Activated CD4-positive, alpha-beta memory T cell treated with anti-CD3 and anti-CD28 coated beads for 36 hours (primary cell): ENCODE measurements at regions of chr16 and their contacts with region 1.

Region 1: DNA sequence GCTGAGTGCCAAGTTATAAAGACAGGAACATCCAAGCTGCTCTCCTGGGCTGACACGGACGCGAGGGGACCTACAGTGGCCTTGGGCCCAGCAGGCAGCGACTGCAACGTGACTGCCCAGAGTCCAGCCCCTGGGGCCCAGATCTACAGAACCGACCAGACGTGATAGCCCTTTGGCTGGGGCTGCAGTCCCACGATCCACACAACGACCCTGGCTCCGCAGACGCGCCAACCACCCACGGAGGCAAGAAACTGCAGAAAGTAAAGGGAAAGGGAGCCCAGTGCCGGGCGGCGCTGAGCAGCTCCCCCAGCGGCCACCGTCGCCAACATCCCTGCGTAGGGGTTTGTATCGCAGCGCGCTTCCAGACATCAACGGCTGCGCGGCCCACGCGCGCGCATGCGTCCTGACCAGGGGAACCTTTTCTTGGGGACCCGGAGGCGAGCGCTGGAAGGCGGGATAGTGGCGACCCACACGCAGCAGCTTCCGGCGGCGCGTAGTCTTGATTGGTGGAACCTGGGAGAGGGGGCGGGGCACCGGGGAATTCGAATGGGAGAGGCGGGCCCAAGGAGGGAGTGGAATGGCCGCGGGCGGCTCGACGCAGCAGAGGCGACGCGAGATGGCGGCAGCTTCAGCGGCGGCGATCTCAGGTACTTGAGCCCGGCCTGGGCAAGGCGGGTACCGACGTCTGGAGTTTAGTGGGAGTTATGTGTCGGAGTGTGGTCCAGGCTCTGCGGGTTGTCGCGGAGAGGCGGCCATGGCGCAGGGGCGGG is at the start of gene KIF22:
- DNase-seq: peak; percentile 100
- H3K4me3 Mint-ChIP-seq: peak within 1 kb of the TSS; percentile 100
- H3K27ac Mint-ChIP-seq: peak within 1 kb of the TSS; percentile 97
- H3K4me1 Mint-ChIP-seq: peaks cover 38% of the 10 kb centered on the region
- H3K27me3 Mint-ChIP-seq: no peaks in the 10 kb centered on the region
- total RNA-seq, gene KIF22: 174 to 180 TPM

Region 2: DNA sequence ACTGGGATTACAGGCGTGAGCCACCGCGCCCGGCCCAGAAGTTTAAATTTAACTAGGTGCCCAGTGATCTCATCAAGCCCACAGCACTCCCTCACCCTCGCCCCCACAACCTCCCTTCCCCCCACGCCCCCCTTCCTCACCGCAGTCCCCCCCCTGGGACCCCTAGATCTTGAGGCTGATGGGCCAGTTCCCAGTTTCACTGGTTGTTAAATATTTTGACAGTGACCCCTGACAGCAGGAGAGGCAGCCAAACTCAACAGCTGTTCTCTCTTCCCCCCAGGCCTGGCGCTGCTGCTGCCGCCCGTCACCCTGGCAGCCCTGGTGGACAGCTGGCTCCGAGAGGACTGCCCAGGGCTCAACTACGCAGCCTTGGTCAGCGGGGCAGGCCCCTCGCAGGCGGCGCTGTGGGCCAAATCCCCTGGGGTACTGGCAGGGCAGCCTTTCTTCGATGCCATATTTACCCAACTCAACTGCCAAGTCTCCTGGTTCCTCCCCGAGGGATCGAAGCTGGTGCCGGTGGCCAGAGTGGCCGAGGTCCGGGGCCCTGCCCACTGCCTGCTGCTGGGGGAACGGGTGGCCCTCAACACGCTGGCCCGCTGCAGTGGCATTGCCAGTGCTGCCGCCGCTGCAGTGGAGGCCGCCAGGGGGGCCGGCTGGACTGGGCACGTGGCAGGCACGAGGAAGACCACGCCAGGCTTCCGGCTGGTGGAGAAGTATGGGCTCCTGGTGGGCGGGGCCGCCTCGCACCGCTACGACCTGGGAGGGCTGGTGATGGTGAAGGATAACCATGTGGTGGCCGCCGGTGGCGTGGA is 95.8 kb before region 1 on chr16:
- CTCF ChIA-PET with region 1: interaction called, 42 read pairs
- POLR2A ChIA-PET with region 1: no interaction called
- intact Hi-C with region 1: no loop called
- DNase-seq: no peak
- H3K4me3 Mint-ChIP-seq: no peak overlapping the region
- H3K27ac Mint-ChIP-seq: no peak overlapping the region
- H3K4me1 Mint-ChIP-seq: peaks cover 4% of the 10 kb centered on the region
- H3K27me3 Mint-ChIP-seq: no peaks in the 10 kb centered on the region

Region 3: GRCh38 chr16:29729116-29729521 is 61.2 kb before region 1 on chr16:
- CTCF ChIA-PET with region 1: interaction called, 13 read pairs
- POLR2A ChIA-PET with region 1: interaction called, 4 read pairs
- intact Hi-C with region 1: loop called (anchors 2 kb)
- DNase-seq: no peak
- H3K4me3 Mint-ChIP-seq: no peak overlapping the region
- H3K27ac Mint-ChIP-seq: no peak overlapping the region
- H3K4me1 Mint-ChIP-seq: peaks cover 27% of the 10 kb centered on the region
- H3K27me3 Mint-ChIP-seq: no peaks in the 10 kb centered on the region

Region 4: GRCh38 chr16:29745853-29746345 is 44.5 kb before region 1 on chr16 and contains the start of gene C16orf54:
- CTCF ChIA-PET with region 1: interaction called, 21 read pairs
- POLR2A ChIA-PET with region 1: interaction called, 15 read pairs
- intact Hi-C with region 1: loop called (anchors 2 kb)
- DNase-seq: peak; percentile 97
- H3K4me3 Mint-ChIP-seq: peak within 1 kb of the TSS; percentile 97
- H3K27ac Mint-ChIP-seq: peak within 1 kb of the TSS; percentile 98
- H3K4me1 Mint-ChIP-seq: peaks cover 60% of the 10 kb centered on the region
- H3K27me3 Mint-ChIP-seq: no peaks in the 10 kb centered on the region
- total RNA-seq, gene C16orf54: 25.2 to 26.2 TPM

Region 5: DNA sequence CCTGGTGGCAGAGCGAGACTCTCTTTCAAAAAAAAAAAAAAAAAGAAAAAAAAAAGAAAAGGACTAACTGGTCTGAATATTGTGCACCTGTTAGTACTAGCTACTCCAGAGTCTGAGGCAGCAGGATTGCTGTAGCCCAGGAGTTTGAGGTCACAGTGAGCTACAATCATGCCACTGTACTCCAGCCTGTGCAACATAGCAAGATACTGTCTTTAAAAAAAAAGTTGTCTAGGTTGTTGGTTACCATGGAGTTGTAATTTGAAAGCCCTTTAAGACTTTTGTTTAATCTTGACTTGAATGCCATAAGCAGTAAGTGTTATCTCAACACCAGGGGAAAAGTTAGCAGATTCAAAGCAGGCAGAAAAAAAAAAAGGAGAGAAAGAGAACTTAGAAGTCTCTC is 33.7 kb before region 1 on chr16:
- CTCF ChIA-PET with region 1: interaction called, 25 read pairs
- POLR2A ChIA-PET with region 1: interaction called, 5 read pairs
- intact Hi-C with region 1: no loop called
- DNase-seq: no peak
- H3K4me3 Mint-ChIP-seq: no peak overlapping the region
- H3K27ac Mint-ChIP-seq: no peak overlapping the region
- H3K4me1 Mint-ChIP-seq: peaks cover 20% of the 10 kb centered on the region
- H3K27me3 Mint-ChIP-seq: no peaks in the 10 kb centered on the region